GM12878 (cell line): ENCODE measurements at regions of chr2 and their contacts with region 1.

Region 1: DNA sequence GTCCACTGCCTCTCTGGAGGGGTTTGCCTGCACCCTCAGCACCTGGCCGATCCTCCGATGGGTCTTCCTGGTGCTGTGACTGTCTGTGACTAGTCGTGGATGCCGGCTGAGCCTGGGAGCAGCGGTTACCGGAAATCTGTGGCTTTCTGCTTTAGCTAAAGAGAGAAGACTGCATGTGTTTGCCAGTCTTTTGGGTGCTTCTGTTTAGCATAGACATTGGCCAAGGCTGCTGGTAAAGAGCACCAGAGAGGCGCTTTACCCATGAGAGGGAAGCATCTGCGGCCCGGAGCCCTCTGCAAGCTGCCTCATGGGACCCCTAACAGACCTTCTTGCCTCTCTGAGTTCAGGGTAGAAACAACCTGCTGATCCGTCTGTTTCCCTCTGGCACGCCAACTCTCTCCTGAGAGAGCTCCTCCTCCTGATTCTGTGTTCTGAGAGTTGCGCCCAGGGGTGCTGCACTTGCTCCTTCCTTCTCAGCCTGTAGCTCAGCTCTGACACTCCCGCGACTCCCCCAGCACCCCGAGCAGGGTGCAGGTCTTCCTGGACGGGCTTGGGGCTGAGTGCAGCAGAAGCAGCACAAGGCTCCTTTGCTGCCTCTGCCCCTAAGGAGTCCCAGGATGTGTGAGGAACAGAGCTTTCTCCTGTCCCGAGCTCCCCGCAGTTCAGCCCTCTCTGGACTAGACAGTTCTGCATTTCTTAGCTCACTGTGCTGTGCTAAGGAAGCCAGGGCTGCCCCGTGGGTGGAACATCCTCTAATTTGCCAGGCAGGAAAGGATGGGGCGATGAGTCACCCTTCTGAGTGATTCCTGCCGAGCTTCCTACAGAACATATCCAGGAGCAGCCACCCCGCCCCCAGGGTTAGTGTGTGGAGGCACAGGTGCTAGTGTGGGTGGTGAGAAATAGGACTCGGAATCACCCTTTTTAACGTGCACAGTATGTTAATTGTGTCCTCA is 203.2 kb downstream of the SH3RF3 start:
- DNase-seq: no peak
- ATAC-seq: peak; percentile 73
- H3K4me3 ChIP-seq: peak overlapping the region; percentile 63
- H3K27ac ChIP-seq: peak overlapping the region; percentile 48; the same call in 1 of the 2 replicates
- H3K4me1 ChIP-seq: peaks cover 35% of the 10 kb centered on the region
- H3K27me3 ChIP-seq: no peaks in the 10 kb centered on the region
- CTCF ChIP-seq: no peak
- EP300 ChIP-seq: no peak
- POLR2A ChIP-seq: no peak
- RAD21 ChIP-seq: no peak

Region 2: DNA sequence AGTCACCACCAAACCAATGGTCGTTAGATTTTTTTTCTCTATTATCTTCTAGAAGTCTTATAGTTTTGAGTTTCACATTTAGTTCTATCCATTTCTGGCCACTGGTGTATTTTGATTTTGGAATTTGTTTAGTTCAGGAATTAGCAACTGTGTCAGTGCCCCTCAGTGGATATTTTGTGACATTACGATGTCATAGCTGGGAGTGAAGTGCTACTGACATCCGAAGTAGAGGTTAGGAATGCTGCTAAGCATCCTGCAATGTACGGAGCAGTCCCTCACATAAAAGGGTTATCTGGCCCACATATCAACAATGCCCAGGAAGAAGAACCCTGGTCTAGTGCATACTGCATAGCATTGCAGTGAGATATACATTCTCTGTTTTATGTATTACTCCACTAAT is 1662.8 kb before region 1 on chr2:
- CTCF ChIA-PET with region 1: no interaction called
- POLR2A ChIA-PET with region 1: no interaction called
- RAD21 ChIA-PET with region 1: no interaction called
- SMC1A ChIA-PET with region 1: no interaction called
- in situ Hi-C with region 1: no loop called
- intact Hi-C with region 1: no loop called
- DNase-seq: no peak
- ATAC-seq: no peak
- H3K4me3 ChIP-seq: no peak overlapping the region
- H3K27ac ChIP-seq: no peak overlapping the region
- H3K4me1 ChIP-seq: no peaks in the 10 kb centered on the region
- H3K27me3 ChIP-seq: no peaks in the 10 kb centered on the region
- CTCF ChIP-seq: no peak
- EP300 ChIP-seq: no peak
- POLR2A ChIP-seq: no peak
- RAD21 ChIP-seq: no peak

Region 3: GRCh38 chr2:109264595-109265328 is 67.4 kb before region 1 on chr2:
- CTCF ChIA-PET with region 1: no interaction called
- POLR2A ChIA-PET with region 1: no interaction called
- RAD21 ChIA-PET with region 1: no interaction called
- SMC1A ChIA-PET with region 1: no interaction called
- in situ Hi-C with region 1: no loop called
- intact Hi-C with region 1: no loop called
- DNase-seq: no peak
- ATAC-seq: no peak
- H3K4me3 ChIP-seq: no peak overlapping the region
- H3K27ac ChIP-seq: no peak overlapping the region
- H3K4me1 ChIP-seq: no peaks in the 10 kb centered on the region; the same call in 1 of the 2 replicates
- H3K27me3 ChIP-seq: no peaks in the 10 kb centered on the region
- CTCF ChIP-seq: no peak
- EP300 ChIP-seq: no peak
- POLR2A ChIP-seq: no peak
- RAD21 ChIP-seq: no peak

Region 4: GRCh38 chr2:109304731-109305470 is 27.3 kb before region 1 on chr2:
- CTCF ChIA-PET with region 1: interaction called, 3 read pairs
- POLR2A ChIA-PET with region 1: no interaction called
- RAD21 ChIA-PET with region 1: interaction called, 10 read pairs
- SMC1A ChIA-PET with region 1: interaction called, 3 read pairs
- in situ Hi-C with region 1: no loop called
- intact Hi-C with region 1: no loop called
- DNase-seq: peak; percentile 7
- ATAC-seq: peak; percentile 69
- H3K4me3 ChIP-seq: no peak overlapping the region
- H3K27ac ChIP-seq: no peak overlapping the region
- H3K4me1 ChIP-seq: no peaks in the 10 kb centered on the region
- H3K27me3 ChIP-seq: no peaks in the 10 kb centered on the region
- CTCF ChIP-seq: no peak
- EP300 ChIP-seq: no peak
- POLR2A ChIP-seq: no peak
- RAD21 ChIP-seq: no peak

Region 5: DNA sequence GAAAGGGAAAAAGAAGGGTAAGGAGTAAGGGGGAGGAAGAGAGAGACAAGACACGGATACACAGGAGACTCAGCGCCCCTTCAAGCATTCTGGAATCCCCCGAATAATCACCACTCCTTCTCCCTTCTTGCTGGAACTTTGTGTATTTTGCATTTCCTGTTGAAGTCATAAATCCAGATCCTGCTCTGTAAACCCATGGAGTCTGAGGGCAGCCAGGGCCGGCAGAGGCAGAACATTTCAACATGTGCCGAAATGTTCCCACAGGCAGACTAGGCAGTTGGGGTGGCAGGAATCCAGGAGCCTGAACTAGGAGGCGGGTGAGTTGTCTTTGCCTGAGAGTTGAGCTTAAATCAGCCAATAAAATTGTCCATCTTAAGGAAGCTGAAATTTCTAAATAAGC is 10.1 kb before region 1 on chr2:
- CTCF ChIA-PET with region 1: interaction called, 4 read pairs
- POLR2A ChIA-PET with region 1: no interaction called
- RAD21 ChIA-PET with region 1: no interaction called
- SMC1A ChIA-PET with region 1: interaction called, 17 read pairs
- in situ Hi-C with region 1: no loop called
- intact Hi-C with region 1: no loop called
- DNase-seq: no peak
- ATAC-seq: no peak
- H3K4me3 ChIP-seq: no peak overlapping the region
- H3K27ac ChIP-seq: no peak overlapping the region
- H3K4me1 ChIP-seq: no peaks in the 10 kb centered on the region
- H3K27me3 ChIP-seq: no peaks in the 10 kb centered on the region
- CTCF ChIP-seq: no peak
- EP300 ChIP-seq: no peak
- POLR2A ChIP-seq: no peak
- RAD21 ChIP-seq: no peak

Region 6: GRCh38 chr2:109457794-109458193 is 125.6 kb after region 1 on chr2:
- CTCF ChIA-PET with region 1: no interaction called
- POLR2A ChIA-PET with region 1: no interaction called
- RAD21 ChIA-PET with region 1: no interaction called
- SMC1A ChIA-PET with region 1: no interaction called
- in situ Hi-C with region 1: no loop called
- intact Hi-C with region 1: no loop called
- DNase-seq: no peak
- ATAC-seq: peak; percentile 82
- H3K4me3 ChIP-seq: no peak overlapping the region
- H3K27ac ChIP-seq: no peak overlapping the region
- H3K4me1 ChIP-seq: no peaks in the 10 kb centered on the region
- H3K27me3 ChIP-seq: no peaks in the 10 kb centered on the region
- CTCF ChIP-seq: no peak; a peak in 1 of 6 replicates
- EP300 ChIP-seq: no peak
- POLR2A ChIP-seq: no peak
- RAD21 ChIP-seq: no peak

Region 7: GRCh38 chr2:109500910-109501309 is 168.7 kb after region 1 on chr2:
- CTCF ChIA-PET with region 1: no interaction called
- POLR2A ChIA-PET with region 1: no interaction called
- RAD21 ChIA-PET with region 1: no interaction called
- SMC1A ChIA-PET with region 1: no interaction called
- in situ Hi-C with region 1: no loop called
- intact Hi-C with region 1: no loop called
- DNase-seq: no peak
- ATAC-seq: no peak
- H3K4me3 ChIP-seq: no peak overlapping the region
- H3K27ac ChIP-seq: no peak overlapping the region
- H3K4me1 ChIP-seq: peaks cover 6% of the 10 kb centered on the region
- H3K27me3 ChIP-seq: no peaks in the 10 kb centered on the region
- CTCF ChIP-seq: no peak
- EP300 ChIP-seq: no peak
- POLR2A ChIP-seq: no peak
- RAD21 ChIP-seq: no peak